ENCODE measurements at regions of chr10 and their contacts with region 1.

Region 1: GRCh38 chr10:33008499-33009243 is 50.6 kb upstream of the ITGB1 start:
- DNase-seq: peak; percentile 38
- ATAC-seq: no peak

Region 2: GRCh38 chr10:31912898-31913852 is 1095.5 kb before region 1 on chr10:
- intact Hi-C with region 1: no loop called
- DNase-seq: peak; percentile 34
- ATAC-seq: peak; percentile 58 to 78

Region 3: GRCh38 chr10:32795598-32796183 is 213.0 kb before region 1 on chr10:
- intact Hi-C with region 1: loop called (anchors 1 to 5 kb)
- DNase-seq: no peak
- ATAC-seq: no peak

Region 4: DNA sequence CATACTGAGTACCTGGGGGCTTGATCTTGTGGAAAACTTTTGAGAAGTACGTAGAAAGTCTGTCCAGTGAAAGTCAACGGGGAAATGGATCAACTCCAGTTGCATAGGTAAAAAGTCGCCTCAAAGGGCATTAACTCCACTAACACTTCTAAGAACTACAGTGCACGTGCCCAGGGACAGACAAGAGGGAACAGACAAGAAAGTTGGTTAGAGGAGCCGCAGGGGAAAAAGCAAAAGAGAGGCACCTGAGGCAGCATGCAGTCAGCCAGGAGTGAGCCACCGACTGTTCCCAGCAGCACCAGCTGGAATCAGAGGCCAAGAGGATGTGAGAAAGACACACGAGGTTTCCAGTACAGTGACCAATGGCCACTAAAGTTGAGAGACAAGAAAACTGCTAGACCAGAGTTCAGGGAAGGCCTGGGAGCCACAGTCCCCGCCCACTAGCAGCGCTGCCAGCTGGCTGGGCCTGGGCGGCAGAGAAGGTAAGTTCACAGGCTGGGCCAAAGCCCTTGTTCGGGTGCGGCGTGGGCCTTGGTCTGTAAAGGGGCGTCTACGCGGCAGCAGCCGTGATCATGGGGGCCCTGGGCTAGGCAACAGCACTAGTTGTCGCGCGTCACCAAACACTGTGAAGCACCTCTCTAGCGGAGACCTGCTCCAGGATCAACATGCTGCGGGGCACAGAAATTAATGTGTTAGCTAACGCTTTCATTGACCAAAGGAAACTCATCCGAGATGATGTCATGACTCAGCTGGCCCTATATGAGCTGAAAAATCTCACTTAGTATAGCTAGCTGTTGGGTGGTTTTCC is 64.6 kb before region 1 on chr10:
- intact Hi-C with region 1: loop called in 1 of 2 experiments (anchors 10 kb)
- DNase-seq: peak; percentile 22
- ATAC-seq: peak; percentile 19 to 46

Region 5: GRCh38 chr10:32961895-32962369 is 46.7 kb before region 1 on chr10:
- intact Hi-C with region 1: loop called in 1 of 2 experiments (anchors 5 kb)
- DNase-seq: no peak
- ATAC-seq: peak in 1 of 2 donors; percentile 18